MCF 10A (cell line): ENCODE measurements at regions of chr7 and their contacts with region 1.

Region 1: GRCh38 chr7:151744656-151745638 is 132.0 kb downstream of the PRKAG2 start:
- DNase-seq: peak; percentile 96
- H3K4me3 Mint-ChIP-seq: peak overlapping the region; percentile 63
- H3K27ac Mint-ChIP-seq: peak overlapping the region; percentile 91
- H3K4me1 Mint-ChIP-seq: peaks cover 19% of the 10 kb centered on the region
- H3K27me3 Mint-ChIP-seq: no peaks in the 10 kb centered on the region
- CTCF ChIP-seq: peak; percentile 47

Region 2: GRCh38 chr7:151680721-151681209 is 64.2 kb before region 1 on chr7:
- CTCF ChIA-PET with region 1: interaction called, 5 read pairs
- POLR2A ChIA-PET with region 1: interaction called, 10 read pairs
- intact Hi-C with region 1: loop called (anchors 5 kb)
- DNase-seq: peak; percentile 86
- H3K4me3 Mint-ChIP-seq: peak overlapping the region; percentile 62
- H3K27ac Mint-ChIP-seq: peak overlapping the region; percentile 98
- H3K4me1 Mint-ChIP-seq: peaks cover 40% of the 10 kb centered on the region
- H3K27me3 Mint-ChIP-seq: no peaks in the 10 kb centered on the region
- CTCF ChIP-seq: no peak

Region 3: DNA sequence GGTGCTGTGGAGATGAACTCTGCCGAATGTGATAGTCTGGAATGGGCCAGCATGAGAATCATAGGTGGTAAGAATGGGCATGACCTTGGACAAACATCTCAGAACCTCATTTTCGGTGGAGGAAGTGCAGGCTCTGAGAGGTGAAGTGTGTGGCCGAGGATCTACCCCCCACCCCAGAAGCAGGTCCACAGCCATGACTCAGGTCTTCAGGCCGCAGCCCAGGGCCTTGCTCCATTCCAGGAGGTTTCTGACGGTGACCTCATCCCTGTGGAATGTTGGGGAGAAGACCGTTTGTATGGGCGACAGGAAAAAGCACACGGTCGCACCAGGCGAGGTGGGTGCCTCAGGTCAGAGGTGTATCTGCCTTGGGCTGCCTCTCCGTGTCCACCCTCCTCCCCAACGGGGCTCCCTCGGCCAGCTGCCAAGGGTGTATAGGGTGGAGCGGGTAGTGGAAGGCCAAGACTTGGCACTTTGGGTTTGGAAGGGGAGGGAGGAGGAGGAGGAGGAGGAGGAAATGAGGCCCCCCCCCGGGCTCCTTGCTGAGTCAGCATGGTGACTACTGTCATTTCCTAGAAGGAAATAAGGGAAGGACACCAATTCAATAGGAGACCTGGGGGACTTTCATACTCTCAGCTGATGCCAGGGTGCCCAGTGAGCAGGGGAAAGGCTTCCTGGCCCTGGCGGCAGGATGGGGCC is 57.3 kb before region 1 on chr7:
- CTCF ChIA-PET with region 1: interaction called, 4 read pairs
- POLR2A ChIA-PET with region 1: interaction called, 3 read pairs
- intact Hi-C with region 1: loop called (anchors 5 kb)
- DNase-seq: peak; percentile 99
- H3K4me3 Mint-ChIP-seq: peak overlapping the region; percentile 28
- H3K27ac Mint-ChIP-seq: peak overlapping the region; percentile 99
- H3K4me1 Mint-ChIP-seq: peaks cover 38% of the 10 kb centered on the region
- H3K27me3 Mint-ChIP-seq: no peaks in the 10 kb centered on the region
- CTCF ChIP-seq: no peak

Region 4: GRCh38 chr7:151727579-151728285 is 17.2 kb before region 1 on chr7:
- CTCF ChIA-PET with region 1: interaction called, 10 read pairs
- POLR2A ChIA-PET with region 1: interaction called, 5 read pairs
- intact Hi-C with region 1: loop called (anchors 1 kb)
- DNase-seq: peak; percentile 99
- H3K4me3 Mint-ChIP-seq: no peak overlapping the region
- H3K27ac Mint-ChIP-seq: peak overlapping the region; percentile 43
- H3K4me1 Mint-ChIP-seq: peaks cover 24% of the 10 kb centered on the region
- H3K27me3 Mint-ChIP-seq: no peaks in the 10 kb centered on the region
- CTCF ChIP-seq: no peak